SK-N-SH (cell line): ENCODE measurements at regions of chr7 and their contacts with region 1.

Region 1: DNA sequence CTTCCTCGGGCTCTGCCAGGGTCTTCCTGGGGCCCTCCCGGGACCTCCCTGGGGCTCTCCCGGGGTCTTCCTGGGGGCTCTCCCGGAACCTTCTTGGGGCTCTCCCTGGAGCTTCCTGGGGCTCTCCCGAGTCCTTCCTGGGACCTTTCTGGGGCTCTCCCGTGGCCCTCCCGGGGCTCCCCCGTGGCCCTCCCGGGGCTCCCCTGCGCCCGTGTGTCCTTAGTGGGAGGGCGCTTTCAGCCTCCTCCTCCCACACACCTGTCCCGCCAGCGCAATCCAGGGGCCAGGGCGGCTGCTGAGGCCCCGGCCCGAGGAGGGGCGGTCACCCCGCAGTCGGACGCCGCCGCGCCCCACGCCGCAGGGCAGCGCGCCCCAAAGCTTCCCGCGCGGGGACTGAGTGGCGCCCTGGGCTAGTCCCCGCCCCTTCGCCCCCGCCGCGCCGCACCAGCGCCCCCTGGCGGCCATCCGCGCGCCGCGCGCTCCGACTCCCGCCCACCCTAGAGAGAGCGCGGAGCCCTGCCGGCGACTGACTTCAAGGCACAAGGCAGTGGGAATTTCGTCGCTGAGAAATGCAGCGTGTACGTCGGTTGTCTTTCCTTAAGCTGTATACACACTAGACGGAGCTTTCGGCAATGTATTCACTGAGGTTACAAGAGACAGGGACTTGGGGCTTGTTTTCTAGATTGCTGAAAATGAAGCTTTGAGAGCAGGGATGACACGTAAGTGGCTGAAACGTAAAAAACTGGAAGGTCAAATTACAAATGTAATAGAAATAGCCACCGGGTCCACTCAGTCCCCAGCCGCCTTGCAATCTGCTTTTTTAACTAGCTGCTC is 47.1 kb downstream of the INSIG1 start:
- DNase-seq: peak; percentile 99
- H3K4me3 ChIP-seq: peak overlapping the region; percentile 49 to 51; a peak in 3 of 4 replicates
- H3K27ac ChIP-seq: no peak overlapping the region
- H3K4me1 ChIP-seq: peaks cover 0 to 3% of the 10 kb centered on the region in 2 experiments; a peak in 1 of 4 replicates
- H3K27me3 ChIP-seq: peaks cover 25% of the 10 kb centered on the region
- CTCF ChIP-seq: peak; percentile 93
- EP300 ChIP-seq: no peak
- RAD21 ChIP-seq: peak; percentile 83

Region 2: DNA sequence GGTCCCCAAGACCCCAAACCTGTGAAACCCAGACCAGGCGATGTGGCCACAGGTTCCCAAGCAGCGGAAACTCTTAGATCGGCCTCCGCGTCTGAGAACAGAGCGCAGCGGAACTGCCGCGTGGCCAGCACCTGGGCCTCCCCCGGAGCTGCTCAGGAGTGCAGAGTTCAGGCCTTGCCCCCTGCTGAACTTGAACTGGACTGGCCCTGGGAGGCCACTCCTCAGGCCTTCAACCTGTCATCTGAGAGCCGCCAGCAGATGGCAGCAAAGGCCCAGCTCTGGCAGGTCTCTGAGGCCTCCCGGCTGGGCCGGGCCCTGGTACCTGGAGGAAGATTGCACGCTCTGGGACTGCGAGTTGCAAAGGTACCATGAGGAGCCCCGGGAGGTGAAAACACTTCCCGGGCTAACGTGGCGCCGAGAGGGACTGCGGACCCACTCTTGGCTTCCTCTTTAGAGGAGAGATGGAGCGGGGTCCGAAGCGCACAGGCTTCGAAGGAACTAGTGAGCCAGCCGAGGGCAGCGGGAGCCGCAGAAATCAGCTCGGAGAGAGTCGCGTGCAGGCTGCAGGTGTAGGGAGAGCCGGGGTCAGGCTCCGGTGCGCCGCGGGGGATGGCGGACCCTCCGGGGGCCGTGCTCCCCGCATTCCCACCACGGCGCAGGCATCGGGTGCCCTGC is 431.0 kb before region 1 on chr7:
- CTCF ChIA-PET with region 1: interaction called, 29 read pairs
- POLR2A ChIA-PET with region 1: no interaction called
- DNase-seq: peak; percentile 96
- H3K4me3 ChIP-seq: peak overlapping the region in 1 of 2 experiments; percentile 6; a peak in 1 of 4 replicates
- H3K27ac ChIP-seq: no peak overlapping the region
- H3K4me1 ChIP-seq: no peaks in the 10 kb centered on the region
- H3K27me3 ChIP-seq: no peaks in the 10 kb centered on the region
- CTCF ChIP-seq: peak; percentile 80
- EP300 ChIP-seq: no peak
- RAD21 ChIP-seq: peak; percentile 88

Region 3: DNA sequence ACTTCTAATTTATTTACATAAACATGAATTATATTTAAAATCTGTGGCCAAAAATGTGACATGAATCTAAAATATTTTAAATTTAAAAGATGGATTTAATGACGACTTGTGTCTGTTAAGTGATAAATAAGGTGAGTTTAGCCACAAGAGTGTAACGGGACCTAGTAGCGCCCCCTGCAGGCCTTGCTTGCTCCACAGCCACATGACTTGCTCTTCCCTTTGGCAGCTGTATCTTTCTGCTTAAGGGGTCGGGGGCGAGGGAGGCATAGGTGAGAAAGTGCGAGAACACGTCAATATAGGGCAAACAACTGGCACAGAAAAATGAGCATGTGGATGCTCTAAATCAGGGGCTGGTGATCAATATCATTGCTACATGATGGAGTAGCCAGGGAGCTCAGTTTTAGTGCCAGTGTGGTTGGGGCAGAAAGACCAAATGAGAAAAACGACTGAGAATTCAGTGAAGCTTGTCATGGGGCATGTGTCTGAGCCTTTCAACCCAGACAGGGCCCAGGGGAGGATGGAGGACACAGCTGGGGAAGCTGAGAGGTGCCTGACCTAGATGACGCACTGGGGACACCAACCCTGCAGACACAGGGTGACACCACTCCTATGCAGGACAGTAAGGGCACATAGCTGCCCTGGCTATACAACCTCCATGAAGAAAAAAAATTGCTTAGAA is 391.7 kb before region 1 on chr7:
- CTCF ChIA-PET with region 1: interaction called, 11 read pairs
- POLR2A ChIA-PET with region 1: no interaction called
- DNase-seq: peak; percentile 63
- H3K4me3 ChIP-seq: no peak overlapping the region; a peak in 1 of 4 replicates
- H3K27ac ChIP-seq: no peak overlapping the region
- H3K4me1 ChIP-seq: no peaks in the 10 kb centered on the region
- H3K27me3 ChIP-seq: no peaks in the 10 kb centered on the region
- CTCF ChIP-seq: peak; percentile 86
- EP300 ChIP-seq: no peak
- RAD21 ChIP-seq: peak; percentile 48

Region 4: DNA sequence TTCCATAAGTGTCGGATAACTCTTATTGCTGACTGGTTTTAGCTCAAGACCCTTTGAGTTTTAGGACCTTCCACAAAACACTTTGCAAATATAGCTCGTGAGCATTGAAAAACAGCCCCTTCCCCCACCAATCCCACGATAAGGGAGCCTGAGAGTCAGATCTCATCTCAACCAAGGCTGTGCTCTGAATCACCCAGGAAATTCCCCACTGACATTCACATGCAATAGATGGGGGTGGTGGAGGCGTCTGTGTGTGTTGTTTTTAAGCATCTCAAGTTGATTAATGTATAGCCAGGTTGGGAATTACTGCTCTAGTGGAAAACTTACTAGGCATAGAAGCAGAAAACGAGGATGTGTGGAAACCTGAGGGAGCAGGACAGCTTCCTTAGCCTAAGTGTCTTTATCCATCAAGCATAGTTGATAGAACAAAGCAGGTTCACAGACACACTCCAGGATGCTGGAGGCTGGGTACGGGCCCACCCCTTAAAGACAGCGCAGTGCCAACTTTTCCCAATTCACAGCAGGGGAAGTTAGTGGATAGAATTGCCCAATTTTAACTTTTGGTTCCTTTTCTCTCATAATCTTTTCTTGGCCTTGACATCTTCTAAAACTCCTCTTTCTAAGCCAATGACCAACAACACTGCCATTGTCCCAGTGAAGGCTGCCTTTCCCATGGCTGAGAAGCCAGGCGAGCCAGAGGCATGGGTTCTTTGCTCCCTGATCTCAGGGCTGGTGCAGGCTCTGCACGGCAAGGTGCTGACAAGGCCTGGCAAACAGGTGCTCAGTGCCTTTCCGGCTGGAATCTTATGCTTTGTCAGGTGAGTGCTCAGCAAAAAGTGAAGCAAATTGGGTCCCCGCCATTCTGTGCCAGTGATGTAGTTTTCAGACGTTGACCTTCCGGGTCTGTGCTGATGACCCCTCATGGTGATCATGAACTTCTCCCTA is 145.6 kb before region 1 on chr7:
- CTCF ChIA-PET with region 1: interaction called, 176 read pairs
- POLR2A ChIA-PET with region 1: no interaction called
- DNase-seq: no peak
- H3K4me3 ChIP-seq: no peak overlapping the region
- H3K27ac ChIP-seq: no peak overlapping the region
- H3K4me1 ChIP-seq: no peaks in the 10 kb centered on the region
- H3K27me3 ChIP-seq: no peaks in the 10 kb centered on the region
- CTCF ChIP-seq: no peak
- EP300 ChIP-seq: no peak
- RAD21 ChIP-seq: no peak

Region 5: DNA sequence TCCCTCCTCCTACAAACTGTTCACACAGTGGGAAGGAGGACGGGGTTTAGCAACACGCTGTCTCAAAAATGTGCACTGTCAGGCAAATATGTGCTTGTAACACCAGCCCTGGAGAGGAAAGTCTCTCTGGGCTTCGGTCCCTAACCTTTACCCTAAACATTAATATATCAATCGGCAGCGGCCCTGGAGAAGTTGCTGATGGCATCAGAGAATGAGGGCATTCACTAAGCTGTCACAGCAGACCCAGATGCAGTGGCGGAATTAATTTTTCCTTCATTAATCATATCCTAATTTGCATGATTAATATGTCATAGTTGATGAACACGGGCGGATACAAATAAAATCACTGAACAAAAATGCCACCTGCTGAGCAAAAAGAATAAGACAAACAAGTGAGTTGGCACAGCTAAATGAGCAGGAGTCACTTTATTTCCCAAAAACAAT is 92.4 kb before region 1 on chr7:
- CTCF ChIA-PET with region 1: interaction called, 18 read pairs
- POLR2A ChIA-PET with region 1: no interaction called
- DNase-seq: no peak
- H3K4me3 ChIP-seq: no peak overlapping the region
- H3K27ac ChIP-seq: no peak overlapping the region
- H3K4me1 ChIP-seq: peaks cover 0 to 41% of the 10 kb centered on the region in 2 experiments; a peak in 2 of 4 replicates
- H3K27me3 ChIP-seq: no peaks in the 10 kb centered on the region
- CTCF ChIP-seq: no peak
- EP300 ChIP-seq: no peak
- RAD21 ChIP-seq: 0 out of 2 replicates have a peak, but pooled peaks have one; percentile 7

Region 6: GRCh38 chr7:155306673-155307470 is 37.9 kb before region 1 on chr7:
- CTCF ChIA-PET with region 1: interaction called, 36 read pairs
- POLR2A ChIA-PET with region 1: no interaction called
- DNase-seq: no peak
- H3K4me3 ChIP-seq: no peak overlapping the region
- H3K27ac ChIP-seq: no peak overlapping the region
- H3K4me1 ChIP-seq: no peaks in the 10 kb centered on the region
- H3K27me3 ChIP-seq: no peaks in the 10 kb centered on the region
- CTCF ChIP-seq: no peak
- EP300 ChIP-seq: no peak
- RAD21 ChIP-seq: no peak

Region 7: GRCh38 chr7:155371884-155372781 is 27.3 kb after region 1 on chr7:
- CTCF ChIA-PET with region 1: interaction called, 21 read pairs
- POLR2A ChIA-PET with region 1: no interaction called
- DNase-seq: peak; percentile 68
- H3K4me3 ChIP-seq: no peak overlapping the region
- H3K27ac ChIP-seq: no peak overlapping the region
- H3K4me1 ChIP-seq: no peaks in the 10 kb centered on the region
- H3K27me3 ChIP-seq: peaks cover 81% of the 10 kb centered on the region
- CTCF ChIP-seq: peak; percentile 46
- EP300 ChIP-seq: no peak
- RAD21 ChIP-seq: no peak

Region 8: DNA sequence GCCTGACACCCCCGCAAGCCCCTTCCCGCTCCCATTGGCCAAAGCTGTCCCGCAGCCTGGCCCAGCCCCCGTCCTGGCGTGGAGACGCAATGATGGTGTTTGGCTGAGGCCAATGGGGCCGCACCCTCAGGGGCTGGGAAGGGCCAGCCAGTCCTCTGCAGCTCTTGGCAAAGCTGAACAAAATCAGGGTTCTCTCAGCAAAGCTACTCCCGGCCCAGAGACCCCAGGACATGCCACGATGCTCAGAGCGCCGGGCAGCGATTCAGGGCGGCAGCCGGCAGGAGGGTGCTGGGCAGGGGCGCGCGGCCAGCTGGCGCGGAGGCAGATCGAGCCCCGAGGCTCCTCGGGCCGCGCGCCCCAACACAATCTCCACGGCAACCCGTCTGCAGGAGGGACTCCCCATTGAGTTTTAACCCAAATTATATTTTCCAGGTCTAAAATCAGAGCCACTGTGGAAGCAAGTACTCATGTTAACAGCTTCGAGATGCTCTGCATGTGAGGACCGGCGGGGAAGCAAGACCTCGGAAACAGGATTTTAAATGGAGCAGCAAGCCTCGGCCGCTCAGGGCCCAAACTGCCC is 210.4 kb after region 1 on chr7:
- CTCF ChIA-PET with region 1: no interaction called
- POLR2A ChIA-PET with region 1: no interaction called
- DNase-seq: no peak
- H3K4me3 ChIP-seq: no peak overlapping the region
- H3K27ac ChIP-seq: no peak overlapping the region
- H3K4me1 ChIP-seq: no peaks in the 10 kb centered on the region
- H3K27me3 ChIP-seq: peaks cover 40% of the 10 kb centered on the region
- CTCF ChIP-seq: no peak
- EP300 ChIP-seq: no peak
- RAD21 ChIP-seq: no peak

Region 9: GRCh38 chr7:155724327-155725005 is 379.6 kb after region 1 on chr7:
- CTCF ChIA-PET with region 1: no interaction called
- POLR2A ChIA-PET with region 1: no interaction called
- DNase-seq: peak; percentile 58
- H3K4me3 ChIP-seq: no peak overlapping the region
- H3K27ac ChIP-seq: no peak overlapping the region
- H3K4me1 ChIP-seq: peaks cover 0 to 10% of the 10 kb centered on the region in 2 experiments; a peak in 2 of 4 replicates
- H3K27me3 ChIP-seq: no peaks in the 10 kb centered on the region
- CTCF ChIP-seq: peak; percentile 40; the same call in 1 of the 2 replicates
- EP300 ChIP-seq: no peak
- RAD21 ChIP-seq: peak; percentile 22; the same call in 1 of the 2 replicates